ENCODE measurements at regions of chr17 and their contacts with region 1.

Region 1: DNA sequence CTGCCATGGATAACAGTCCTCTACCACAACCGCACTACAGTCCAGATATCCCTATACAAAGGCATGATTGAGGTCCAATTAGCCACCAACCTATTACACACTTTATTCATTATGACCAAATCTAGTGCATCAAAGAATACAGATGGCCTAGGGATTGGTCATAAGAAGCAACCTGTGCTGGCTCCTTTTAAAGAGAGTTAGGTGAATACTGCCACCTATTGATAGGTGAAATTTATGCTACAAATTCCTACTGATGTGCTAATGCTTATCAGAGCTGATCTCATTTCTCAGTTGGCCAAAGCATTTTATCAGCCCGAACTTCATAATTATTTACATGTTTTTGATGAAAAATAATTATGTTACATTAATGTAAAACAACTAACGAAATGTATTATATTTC is 166.2 kb downstream of the ANKFN1 start:
- DNase-seq: peak; percentile 64
- H3K4me3 ChIP-seq: no peak overlapping the region
- H3K27ac ChIP-seq: no peak overlapping the region
- H3K4me1 ChIP-seq: peaks cover 17% of the 10 kb centered on the region
- H3K27me3 ChIP-seq: peaks cover 23 to 35% of the 10 kb centered on the region in 2 experiments
- CTCF ChIP-seq: peak; percentile 40 to 52
- POLR2A ChIP-seq: no peak

Region 2: DNA sequence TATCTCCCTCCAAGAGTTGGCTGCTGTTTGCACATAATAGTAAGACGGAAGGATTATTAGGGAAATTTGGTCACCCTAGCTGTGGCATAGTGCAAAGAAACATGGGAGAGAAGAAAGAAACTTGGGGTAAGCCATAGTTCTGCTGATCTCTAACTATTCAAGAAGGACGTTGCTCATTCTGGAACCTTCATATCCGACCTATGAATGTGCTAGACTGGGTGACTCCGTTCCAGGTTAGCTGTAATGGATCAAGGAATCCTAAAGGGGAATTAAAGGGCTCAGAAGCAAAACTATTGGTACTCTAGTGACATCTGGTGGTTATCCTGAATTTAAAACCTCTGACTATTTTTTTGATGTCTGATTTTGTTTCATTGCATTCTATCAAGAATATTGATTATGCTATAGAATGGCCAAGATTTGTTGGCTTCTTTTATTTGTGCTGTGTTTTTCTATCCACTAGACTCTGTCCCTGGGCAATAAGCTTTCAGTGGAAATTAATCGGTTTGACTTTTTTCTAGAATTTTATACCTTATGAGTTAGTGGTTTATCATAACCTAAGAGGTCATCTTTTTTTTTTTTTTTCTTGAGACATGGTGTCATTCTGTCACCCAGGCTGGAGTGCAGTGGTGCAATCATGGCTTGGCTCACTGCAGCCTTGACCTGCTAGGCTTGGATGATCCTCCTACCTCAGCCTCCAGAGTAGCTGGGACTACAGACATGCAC is 549.2 kb before region 1 on chr17:
- CTCF ChIA-PET with region 1: no interaction called
- POLR2A ChIA-PET with region 1: no interaction called
- dilution Hi-C with region 1: no loop called
- intact Hi-C with region 1: loop called (anchors 10 kb)
- DNase-seq: peak; percentile 49
- H3K4me3 ChIP-seq: no peak overlapping the region
- H3K27ac ChIP-seq: no peak overlapping the region
- H3K4me1 ChIP-seq: no peaks in the 10 kb centered on the region
- H3K27me3 ChIP-seq: no peaks in the 10 kb centered on the region
- CTCF ChIP-seq: peak; percentile 31 to 33
- POLR2A ChIP-seq: no peak

Region 3: GRCh38 chr17:56125830-56126819 is 193.4 kb before region 1 on chr17:
- CTCF ChIA-PET with region 1: interaction called, 185 read pairs
- POLR2A ChIA-PET with region 1: no interaction called
- dilution Hi-C with region 1: no loop called
- intact Hi-C with region 1: loop called (anchors 1 kb)
- DNase-seq: peak; percentile 56
- H3K4me3 ChIP-seq: no peak overlapping the region
- H3K27ac ChIP-seq: no peak overlapping the region
- H3K4me1 ChIP-seq: no peaks in the 10 kb centered on the region
- H3K27me3 ChIP-seq: peaks cover 8 to 10% of the 10 kb centered on the region in 2 experiments
- CTCF ChIP-seq: peak; percentile 62 to 65
- POLR2A ChIP-seq: no peak

Region 4: DNA sequence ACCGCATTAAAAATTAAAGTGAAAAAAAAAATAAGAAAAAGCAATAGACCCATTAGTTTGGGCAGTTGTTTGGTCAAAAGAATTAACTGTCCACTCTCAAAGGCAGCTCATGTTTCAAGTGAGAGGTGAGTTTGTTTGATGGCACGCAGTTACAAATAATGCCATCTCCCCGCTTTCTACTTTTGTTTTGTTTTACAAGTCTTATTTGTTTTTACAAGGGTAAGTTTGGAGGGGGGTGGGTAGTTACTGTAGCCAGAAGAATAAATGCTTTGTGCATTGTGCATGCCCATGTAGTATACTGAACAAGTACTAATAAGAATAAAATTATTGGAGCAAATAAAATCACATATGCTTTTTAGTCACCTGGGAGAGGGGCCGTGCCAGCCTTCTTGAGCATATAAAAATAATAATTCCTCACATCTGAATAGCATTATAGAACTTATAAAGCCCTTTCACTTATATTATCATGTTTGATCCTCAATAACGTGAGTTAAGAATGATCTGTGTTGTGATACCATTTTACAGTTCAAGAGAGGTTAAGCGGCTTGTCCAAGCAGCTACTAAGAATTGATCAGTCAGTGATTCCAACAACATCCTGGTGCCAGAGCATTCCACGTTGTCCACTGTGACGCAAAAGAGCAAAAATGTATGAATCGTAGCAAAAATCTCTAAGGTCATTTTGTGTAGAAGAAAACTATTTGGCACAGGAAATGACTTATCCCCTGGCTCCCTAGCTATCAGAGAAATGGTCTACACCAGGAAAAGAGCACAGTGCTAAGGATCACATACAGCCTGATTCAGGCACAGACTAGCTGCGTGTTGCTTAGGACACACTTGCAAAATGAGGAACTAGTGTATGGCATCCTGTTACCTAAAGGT is 133.4 kb before region 1 on chr17:
- CTCF ChIA-PET with region 1: no interaction called
- POLR2A ChIA-PET with region 1: no interaction called
- dilution Hi-C with region 1: no loop called
- intact Hi-C with region 1: loop called (anchors 1 kb)
- DNase-seq: peak; percentile 84
- H3K4me3 ChIP-seq: no peak overlapping the region
- H3K27ac ChIP-seq: peak overlapping the region; percentile 73
- H3K4me1 ChIP-seq: peaks cover 12% of the 10 kb centered on the region
- H3K27me3 ChIP-seq: no peaks in the 10 kb centered on the region
- CTCF ChIP-seq: no peak
- POLR2A ChIP-seq: no peak

Region 5: GRCh38 chr17:56292010-56292409 is 27.5 kb before region 1 on chr17:
- CTCF ChIA-PET with region 1: interaction called, 6 read pairs
- POLR2A ChIA-PET with region 1: no interaction called
- dilution Hi-C with region 1: no loop called
- intact Hi-C with region 1: loop called (anchors 2 kb)
- DNase-seq: peak; percentile 84
- H3K4me3 ChIP-seq: no peak overlapping the region
- H3K27ac ChIP-seq: peak overlapping the region; percentile 69
- H3K4me1 ChIP-seq: peaks cover 25% of the 10 kb centered on the region
- H3K27me3 ChIP-seq: no peaks in the 10 kb centered on the region
- CTCF ChIP-seq: no peak
- POLR2A ChIP-seq: no peak

Region 6: DNA sequence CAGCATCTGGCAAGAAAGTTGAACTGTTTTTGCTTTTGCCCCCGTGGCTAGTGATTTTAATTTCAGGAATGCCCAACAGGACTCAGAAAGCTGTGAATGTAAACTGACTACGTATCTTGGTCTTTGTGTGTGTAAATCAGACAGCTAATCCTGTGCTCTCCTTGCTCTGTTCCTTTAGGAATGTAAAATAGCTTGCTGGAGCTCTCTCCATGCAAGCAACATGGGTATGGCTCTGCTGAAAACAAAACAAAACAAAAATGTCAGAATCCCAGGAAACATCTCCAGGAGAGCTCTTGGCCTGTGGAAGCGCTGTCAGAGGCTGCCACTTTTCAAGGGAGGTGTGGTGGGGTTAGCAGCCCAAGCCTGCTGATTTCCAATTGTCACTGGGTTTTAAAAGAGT is 112.2 kb after region 1 on chr17:
- CTCF ChIA-PET with region 1: no interaction called
- POLR2A ChIA-PET with region 1: no interaction called
- dilution Hi-C with region 1: no loop called
- intact Hi-C with region 1: no loop called
- DNase-seq: no peak
- H3K4me3 ChIP-seq: no peak overlapping the region
- H3K27ac ChIP-seq: no peak overlapping the region
- H3K4me1 ChIP-seq: peaks cover 4% of the 10 kb centered on the region
- H3K27me3 ChIP-seq: no peaks in the 10 kb centered on the region
- CTCF ChIP-seq: no peak
- POLR2A ChIP-seq: no peak

Region 7: DNA sequence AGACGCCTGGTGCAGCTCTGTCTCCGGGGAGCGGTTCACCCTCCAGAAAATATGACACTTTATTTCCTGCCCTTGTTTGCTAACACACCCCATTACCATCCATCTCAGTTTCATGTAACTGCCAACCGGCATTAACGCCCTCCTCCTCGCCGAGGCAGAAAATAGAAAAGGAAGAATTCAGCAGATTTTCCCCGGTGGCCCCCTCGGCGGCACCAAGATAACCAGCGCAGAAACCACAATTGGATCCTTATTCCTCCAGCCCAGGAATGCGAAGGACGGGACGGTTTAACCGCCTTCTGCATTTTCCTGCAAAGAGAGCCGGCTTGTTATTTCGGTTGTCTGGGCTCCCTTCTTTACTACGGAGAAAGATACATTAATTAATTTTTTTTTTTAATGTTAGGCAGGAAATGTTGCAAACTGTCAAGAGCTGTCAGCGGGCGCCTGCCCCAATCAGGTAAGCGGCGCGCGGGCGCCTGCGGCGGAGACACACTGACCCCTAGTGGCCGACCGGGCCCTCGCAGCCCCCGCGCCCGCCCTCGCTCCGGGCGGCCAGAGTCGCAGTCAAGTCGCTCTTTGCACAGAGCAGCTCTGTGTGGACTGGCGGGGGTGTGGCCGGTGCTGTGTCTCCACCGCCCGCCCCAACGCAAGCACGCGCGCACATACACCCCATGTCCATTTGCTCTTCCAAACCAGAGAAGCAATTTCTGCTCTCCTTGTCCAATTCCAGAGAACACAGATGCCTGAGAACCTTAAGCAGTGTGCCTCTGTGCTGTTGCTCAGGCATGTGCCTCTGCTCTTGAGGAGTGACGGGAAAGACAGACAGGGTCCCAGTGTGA is 460.6 kb after region 1 on chr17:
- CTCF ChIA-PET with region 1: interaction called, 4 read pairs
- POLR2A ChIA-PET with region 1: no interaction called
- dilution Hi-C with region 1: no loop called
- intact Hi-C with region 1: loop called (anchors 5 kb)
- DNase-seq: peak; percentile 79
- H3K4me3 ChIP-seq: peak overlapping the region in 2 of 3 experiments; percentile 23 to 54
- H3K27ac ChIP-seq: no peak overlapping the region
- H3K4me1 ChIP-seq: peaks cover 11% of the 10 kb centered on the region
- H3K27me3 ChIP-seq: peaks cover 0 to 5% of the 10 kb centered on the region in 2 experiments
- CTCF ChIP-seq: peak; percentile 96 to 99
- POLR2A ChIP-seq: no peak

Measured in endothelial cell of umbilical vein (primary cell).